Right cardiac atrium (tissue), 5 donors: ENCODE measurements at regions of chr2 and their contacts with region 1.

Region 1: DNA sequence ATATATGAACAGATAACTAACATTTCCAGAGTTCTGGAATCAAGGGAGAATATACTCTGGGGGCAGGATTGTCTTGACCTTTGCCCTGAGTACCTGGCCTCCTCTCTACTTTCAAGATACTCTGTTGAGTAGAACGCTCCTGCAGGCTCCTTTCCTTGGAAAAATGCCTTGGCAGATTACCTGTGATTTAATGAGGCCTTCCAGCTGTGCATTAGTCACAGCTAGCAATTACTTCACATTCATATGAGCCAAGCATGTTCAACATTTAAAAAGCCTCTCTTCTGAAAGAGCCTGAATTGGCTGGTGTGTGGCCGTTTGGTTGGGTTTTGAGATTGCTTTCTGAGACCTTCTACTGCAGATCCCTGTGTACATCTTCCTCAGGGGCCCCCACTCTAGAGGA is 142.2 kb downstream of the PLCL1 start:
- DNase-seq: peak in 1 of 3 donors; percentile 14
- ATAC-seq: no peak
- H3K4me3 ChIP-seq: no peak overlapping the region
- H3K27ac ChIP-seq: no peak overlapping the region
- H3K4me1 ChIP-seq: peaks cover 11% of the 10 kb centered on the region
- H3K27me3 ChIP-seq: no peaks in the 10 kb centered on the region

Region 2: DNA sequence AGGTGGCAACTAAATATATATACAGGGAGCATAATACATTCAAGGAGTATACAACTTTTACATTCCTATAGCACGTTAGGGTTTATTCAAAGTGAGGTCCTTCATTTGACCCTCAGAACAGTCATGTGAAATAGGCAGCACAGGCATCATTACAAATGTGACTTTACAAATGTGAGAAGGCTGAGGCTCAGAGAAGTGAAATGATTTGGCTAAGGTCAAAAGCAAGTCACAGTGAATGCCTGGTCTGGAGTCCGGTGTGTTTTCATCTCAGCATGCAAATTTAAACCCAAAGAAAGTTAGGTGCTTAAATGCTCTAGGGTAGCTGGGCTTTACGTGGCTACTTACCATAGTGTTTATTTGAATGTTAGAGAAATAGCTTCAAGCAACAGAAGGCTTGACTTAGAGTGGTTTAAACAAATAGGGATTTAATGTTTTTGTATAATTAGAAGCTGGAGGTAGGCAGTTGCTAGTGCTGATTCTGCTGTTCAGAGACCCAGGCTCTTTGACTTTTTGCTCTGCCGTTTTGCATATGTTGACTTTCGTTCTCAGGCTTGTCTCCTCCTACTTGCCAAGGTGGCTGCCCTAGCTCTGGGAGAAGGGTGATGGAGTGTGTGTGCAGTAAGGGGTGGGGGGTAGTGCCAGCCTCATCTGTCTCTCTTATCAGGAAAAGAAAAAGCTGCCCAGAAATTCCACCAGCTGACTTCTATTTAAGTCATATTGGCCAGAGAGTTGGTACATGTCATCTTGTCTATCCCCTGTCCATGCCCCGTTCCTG is 53.0 kb before region 1 on chr2:
- intact Hi-C with region 1: loop called in 1 of 4 experiments (anchors 10 kb)
- DNase-seq: peak; percentile 28 to 61 (median 61)
- ATAC-seq: peak; percentile 88 to 91
- H3K4me3 ChIP-seq: no peak overlapping the region
- H3K27ac ChIP-seq: peak overlapping the region; percentile 93
- H3K4me1 ChIP-seq: peaks cover 9% of the 10 kb centered on the region
- H3K27me3 ChIP-seq: no peaks in the 10 kb centered on the region